ENCODE measurements at regions of chr13 and their contacts with region 1.

Region 1: GRCh38 chr13:43159026-43159461 is 135.7 kb downstream of the DNAJC15 start:
- DNase-seq: peak in 1 of 2 experiments; percentile 51
- H3K4me3 ChIP-seq: no peak overlapping the region
- H3K27ac ChIP-seq: no peak overlapping the region
- H3K4me1 ChIP-seq: peaks cover 24% of the 10 kb centered on the region
- H3K27me3 ChIP-seq: no peaks in the 10 kb centered on the region
- CTCF ChIP-seq: no peak

Region 2: DNA sequence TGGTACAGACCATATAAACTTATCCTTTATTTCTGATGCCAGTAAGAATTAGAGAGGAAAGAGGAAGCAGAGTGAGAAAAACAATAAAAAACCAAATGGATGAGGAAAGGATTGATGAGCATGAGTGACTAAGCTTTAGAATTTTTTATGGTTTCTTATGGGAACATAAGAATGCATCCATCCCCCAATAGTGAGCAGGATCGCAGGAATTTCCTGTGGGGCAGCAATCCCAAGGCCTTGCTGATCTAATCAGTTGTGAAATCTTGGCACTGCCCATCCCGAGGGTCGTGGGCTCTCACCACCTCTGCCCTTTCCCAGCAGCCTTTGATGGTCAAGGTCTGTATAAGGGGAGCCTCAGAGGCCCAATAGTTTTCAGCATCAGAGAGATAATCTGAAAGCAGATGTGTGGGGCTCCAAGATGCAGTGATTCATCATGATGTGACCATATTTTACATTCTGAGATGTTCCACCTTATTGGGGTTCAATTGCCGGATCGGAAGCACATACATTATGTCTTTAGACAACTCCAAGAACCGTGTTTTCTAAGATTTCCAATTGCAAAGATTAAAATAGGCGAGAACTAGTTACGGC is 86.4 kb after region 1 on chr13:
- CTCF ChIA-PET with region 1: no interaction called
- POLR2A ChIA-PET with region 1: no interaction called
- intact Hi-C with region 1: loop called (anchors 5 kb)
- DNase-seq: peak in 1 of 2 experiments; percentile 37
- H3K4me3 ChIP-seq: no peak overlapping the region
- H3K27ac ChIP-seq: peak overlapping the region; percentile 46
- H3K4me1 ChIP-seq: peaks cover 6% of the 10 kb centered on the region; the same call in 1 of the 2 replicates
- H3K27me3 ChIP-seq: no peaks in the 10 kb centered on the region
- CTCF ChIP-seq: no peak

Region 3: GRCh38 chr13:43303033-43303729 is 144.1 kb after region 1 on chr13:
- CTCF ChIA-PET with region 1: no interaction called
- POLR2A ChIA-PET with region 1: no interaction called
- intact Hi-C with region 1: loop called (anchors 10 kb)
- DNase-seq: peak in 1 of 2 experiments; percentile 39
- H3K4me3 ChIP-seq: no peak overlapping the region
- H3K27ac ChIP-seq: no peak overlapping the region
- H3K4me1 ChIP-seq: no peaks in the 10 kb centered on the region
- H3K27me3 ChIP-seq: no peaks in the 10 kb centered on the region
- CTCF ChIP-seq: peak; percentile 53; the same call in 1 of the 2 replicates

Region 4: GRCh38 chr13:43510956-43511901 is 352.2 kb after region 1 on chr13:
- CTCF ChIA-PET with region 1: no interaction called
- POLR2A ChIA-PET with region 1: no interaction called
- intact Hi-C with region 1: no loop called
- DNase-seq: no peak
- H3K4me3 ChIP-seq: no peak overlapping the region
- H3K27ac ChIP-seq: no peak overlapping the region
- H3K4me1 ChIP-seq: no peaks in the 10 kb centered on the region
- H3K27me3 ChIP-seq: no peaks in the 10 kb centered on the region
- CTCF ChIP-seq: no peak

Region 5: DNA sequence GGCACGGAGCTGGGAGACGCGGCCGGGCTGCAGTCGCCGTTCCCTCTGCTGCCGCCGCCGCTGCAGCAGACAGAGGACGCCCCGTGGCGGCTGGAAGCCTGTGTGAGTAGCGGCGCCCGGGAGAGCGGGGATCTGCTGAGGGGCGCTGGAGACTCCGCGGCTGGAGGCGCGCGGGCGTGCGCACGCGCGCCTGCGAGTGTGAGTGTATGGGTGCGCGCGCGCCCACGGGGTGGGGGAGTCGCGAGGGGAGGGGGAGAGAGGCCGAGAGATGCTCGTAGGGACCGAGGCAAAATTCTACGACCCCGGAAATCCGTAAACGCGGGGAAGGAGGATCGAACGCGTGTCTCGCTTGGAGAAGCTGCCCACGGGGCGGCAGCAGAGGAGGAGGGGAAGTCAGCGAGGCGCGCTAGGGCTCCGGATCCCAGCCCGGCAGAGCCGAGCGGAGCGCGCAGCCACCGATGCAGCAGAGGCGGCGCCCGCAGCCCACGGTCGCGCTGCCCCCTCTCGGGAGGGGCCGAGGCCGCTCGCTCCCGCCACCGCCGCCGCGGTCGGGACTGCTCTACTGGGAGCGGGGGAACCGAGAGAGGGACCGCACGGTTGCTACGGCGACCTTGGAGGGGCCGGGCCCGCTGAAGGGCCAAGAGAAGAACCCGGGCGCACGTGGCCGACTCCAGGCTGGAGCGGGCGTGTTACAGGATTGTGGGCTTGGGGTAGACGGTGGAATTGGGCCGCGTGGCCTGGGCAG is 627.9 kb after region 1 on chr13 and contains the start of gene ENOX1:
- CTCF ChIA-PET with region 1: no interaction called
- POLR2A ChIA-PET with region 1: interaction called, 3 read pairs
- intact Hi-C with region 1: loop called (anchors 10 kb)
- DNase-seq: peak in 1 of 2 experiments; percentile 32
- H3K4me3 ChIP-seq: peak within 1 kb of the TSS; percentile 76
- H3K27ac ChIP-seq: no peak within 1 kb of the TSS
- H3K4me1 ChIP-seq: peaks cover 16% of the 10 kb centered on the region
- H3K27me3 ChIP-seq: no peaks in the 10 kb centered on the region
- CTCF ChIP-seq: no peak
- total RNA-seq, gene ENOX1: 0.35 and 0.38 TPM in 2 replicates